Activated CD8-positive, alpha-beta memory T cell treated with anti-CD3 and anti-CD28 coated beads, Interleukin-2, amount 10 ng/mL, durations not matched to agents 7 days and 5 days (primary cell): ENCODE measurements at regions of chr11 and their contacts with region 1.

Region 1: DNA sequence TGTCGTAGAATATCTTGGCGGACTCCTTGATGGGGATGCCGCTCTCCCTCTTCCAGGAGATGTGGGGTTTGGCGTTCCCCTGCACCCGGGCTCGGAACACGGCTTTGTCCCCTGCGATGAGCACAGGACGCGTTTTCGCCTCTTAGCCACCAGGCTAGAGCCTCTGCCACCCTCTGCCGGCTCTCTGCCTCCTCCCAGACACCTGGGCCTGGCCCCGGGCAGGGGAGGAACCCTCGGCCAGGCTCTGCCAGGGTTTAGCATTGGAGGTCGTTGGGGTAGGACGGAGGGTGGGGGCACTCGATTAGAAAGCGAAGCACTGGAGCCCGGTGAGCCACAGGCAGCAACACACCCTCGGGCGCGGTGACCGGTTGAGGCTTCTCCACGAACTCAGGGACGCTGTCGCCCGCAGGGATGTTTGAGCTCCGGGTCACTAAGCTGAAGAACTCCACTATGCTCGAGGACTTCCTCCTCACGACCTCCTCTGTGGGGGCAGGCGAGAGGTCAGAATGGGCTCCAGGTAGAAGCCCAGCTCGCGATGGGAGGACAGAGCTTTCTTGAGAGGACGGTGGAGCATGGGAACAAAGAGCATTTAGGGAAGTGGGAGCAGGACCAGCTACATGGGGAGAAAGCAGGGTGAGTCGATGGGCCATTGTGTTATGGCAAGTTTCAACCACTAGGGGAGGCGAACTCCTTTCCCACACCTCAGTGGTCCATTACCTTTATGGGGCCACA is 4.3 kb downstream of the IGSF22 start:
- DNase-seq: peak; percentile 61
- ATAC-seq: peak; percentile 58
- H3K4me3 Mint-ChIP-seq: peak overlapping the region; percentile 78
- H3K27ac Mint-ChIP-seq: no peak overlapping the region
- H3K4me1 Mint-ChIP-seq: peaks cover 8% of the 10 kb centered on the region
- H3K27me3 Mint-ChIP-seq: peaks cover 8% of the 10 kb centered on the region

Region 2: DNA sequence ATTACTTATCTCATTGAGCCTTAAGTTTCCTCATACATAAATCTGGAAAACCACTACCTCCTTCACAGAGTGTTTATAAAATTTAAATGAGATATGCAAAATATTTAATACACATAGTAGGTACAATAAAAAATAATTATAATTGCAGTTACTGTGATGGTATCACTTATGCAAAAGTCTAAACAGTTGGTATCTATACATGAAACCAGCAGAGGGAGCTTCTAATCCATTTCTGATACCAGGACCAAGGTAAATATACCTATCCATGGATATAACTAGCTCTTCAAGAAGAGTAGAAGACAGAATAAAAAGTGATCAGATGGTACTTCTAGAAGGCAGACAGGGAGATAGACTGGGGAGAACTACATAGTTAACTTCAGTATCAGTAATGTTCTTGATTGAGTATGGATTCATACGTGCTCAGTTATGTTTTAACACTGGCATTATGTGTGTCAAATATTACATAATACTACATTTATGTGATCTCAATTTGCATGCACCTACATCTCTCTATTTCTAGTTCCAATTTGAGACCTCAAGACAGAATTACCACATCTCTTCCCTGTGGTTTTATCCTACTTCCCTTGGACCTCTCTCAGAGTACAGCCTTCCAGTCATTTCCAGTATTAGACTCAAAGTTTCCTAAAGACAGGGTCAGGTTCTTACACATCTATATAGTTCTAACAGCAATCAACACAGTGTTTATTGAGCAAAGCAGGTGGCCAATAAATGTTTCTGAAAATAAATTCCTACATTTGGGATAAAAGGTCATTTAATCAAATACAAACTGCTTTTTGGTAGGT is 181.3 kb before region 1 on chr11:
- CTCF ChIA-PET with region 1: interaction called, 19 read pairs
- DNase-seq: no peak
- ATAC-seq: peak; percentile 55
- H3K4me3 Mint-ChIP-seq: no peak overlapping the region
- H3K27ac Mint-ChIP-seq: no peak overlapping the region
- H3K4me1 Mint-ChIP-seq: no peaks in the 10 kb centered on the region
- H3K27me3 Mint-ChIP-seq: no peaks in the 10 kb centered on the region

Region 3: GRCh38 chr11:18650859-18651557 is 70.7 kb before region 1 on chr11:
- CTCF ChIA-PET with region 1: interaction called, 11 read pairs
- DNase-seq: peak; percentile 67
- ATAC-seq: peak; percentile 83
- H3K4me3 Mint-ChIP-seq: no peak overlapping the region
- H3K27ac Mint-ChIP-seq: peak overlapping the region; percentile 65
- H3K4me1 Mint-ChIP-seq: peaks cover 12% of the 10 kb centered on the region
- H3K27me3 Mint-ChIP-seq: no peaks in the 10 kb centered on the region

Region 4: GRCh38 chr11:18710545-18710944 is 11.2 kb before region 1 on chr11:
- CTCF ChIA-PET with region 1: interaction called, 15 read pairs
- DNase-seq: no peak
- ATAC-seq: no peak
- H3K4me3 Mint-ChIP-seq: no peak overlapping the region
- H3K27ac Mint-ChIP-seq: no peak overlapping the region
- H3K4me1 Mint-ChIP-seq: peaks cover 20% of the 10 kb centered on the region
- H3K27me3 Mint-ChIP-seq: peaks cover 20% of the 10 kb centered on the region

Region 5: DNA sequence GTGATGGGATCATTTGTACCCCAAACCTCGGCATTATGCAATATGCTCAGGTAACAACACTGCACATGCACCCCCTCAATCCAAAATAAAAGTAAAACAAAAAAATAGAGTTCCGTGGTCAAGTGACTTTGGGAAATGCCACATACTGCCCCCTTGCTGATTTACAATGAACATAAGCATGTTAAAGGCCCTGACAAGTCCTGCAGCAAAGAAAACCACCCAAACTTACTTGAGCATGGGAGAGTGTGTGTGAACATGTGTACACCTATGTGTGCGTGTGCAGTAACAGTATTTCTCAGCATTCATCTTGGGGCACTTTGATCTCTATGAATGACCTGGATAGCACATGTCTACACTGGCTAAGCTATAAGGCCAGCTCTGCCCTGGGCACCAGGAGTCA is 20.1 kb after region 1 on chr11:
- CTCF ChIA-PET with region 1: interaction called, 23 read pairs
- DNase-seq: no peak
- ATAC-seq: no peak
- H3K4me3 Mint-ChIP-seq: no peak overlapping the region
- H3K27ac Mint-ChIP-seq: no peak overlapping the region
- H3K4me1 Mint-ChIP-seq: peaks cover 4% of the 10 kb centered on the region
- H3K27me3 Mint-ChIP-seq: no peaks in the 10 kb centered on the region

Region 6: DNA sequence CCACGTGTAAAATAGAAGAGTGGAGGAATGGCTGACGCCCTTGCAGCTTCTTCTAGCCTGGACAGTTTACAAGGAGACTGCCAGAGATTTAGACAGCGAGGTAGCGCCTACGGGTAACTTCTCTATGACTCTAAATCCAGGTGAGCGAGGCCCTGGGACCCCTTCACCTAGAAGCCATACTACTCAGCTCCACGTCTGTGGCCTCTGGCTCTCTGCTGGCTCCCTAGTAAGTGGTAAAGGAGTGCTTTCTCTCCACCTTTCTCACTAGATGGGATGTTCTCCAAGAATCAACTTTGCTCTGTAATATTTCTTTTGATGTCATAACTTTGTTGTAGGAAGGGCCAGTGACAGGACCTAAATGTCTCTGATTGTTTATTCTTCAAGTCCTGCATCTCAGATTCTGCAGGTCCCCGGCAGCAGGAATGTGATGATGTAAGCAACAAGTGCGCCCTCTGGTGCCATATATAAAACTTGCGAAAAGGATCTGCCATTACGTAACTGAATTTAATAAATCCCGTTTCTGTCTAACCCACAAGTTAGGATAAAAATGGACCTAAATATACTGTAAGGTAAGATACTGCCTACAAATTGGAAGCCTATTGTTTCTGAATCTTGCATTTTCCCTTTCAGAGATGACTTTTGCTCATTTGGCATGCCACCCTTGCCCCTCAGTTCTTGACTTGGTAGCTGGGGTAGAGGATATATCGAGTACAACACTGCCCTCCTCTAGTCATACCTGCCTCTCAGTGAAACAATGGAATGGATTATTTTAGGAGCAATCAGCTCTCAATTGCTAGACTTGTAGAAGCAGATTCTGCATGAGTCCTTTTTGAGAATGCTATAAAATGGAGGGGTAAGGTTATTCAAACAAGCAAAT is 80.9 kb after region 1 on chr11:
- CTCF ChIA-PET with region 1: no interaction called
- DNase-seq: peak; percentile 60
- ATAC-seq: no peak
- H3K4me3 Mint-ChIP-seq: no peak overlapping the region
- H3K27ac Mint-ChIP-seq: no peak overlapping the region
- H3K4me1 Mint-ChIP-seq: peaks cover 7% of the 10 kb centered on the region
- H3K27me3 Mint-ChIP-seq: peaks cover 55% of the 10 kb centered on the region

Region 7: DNA sequence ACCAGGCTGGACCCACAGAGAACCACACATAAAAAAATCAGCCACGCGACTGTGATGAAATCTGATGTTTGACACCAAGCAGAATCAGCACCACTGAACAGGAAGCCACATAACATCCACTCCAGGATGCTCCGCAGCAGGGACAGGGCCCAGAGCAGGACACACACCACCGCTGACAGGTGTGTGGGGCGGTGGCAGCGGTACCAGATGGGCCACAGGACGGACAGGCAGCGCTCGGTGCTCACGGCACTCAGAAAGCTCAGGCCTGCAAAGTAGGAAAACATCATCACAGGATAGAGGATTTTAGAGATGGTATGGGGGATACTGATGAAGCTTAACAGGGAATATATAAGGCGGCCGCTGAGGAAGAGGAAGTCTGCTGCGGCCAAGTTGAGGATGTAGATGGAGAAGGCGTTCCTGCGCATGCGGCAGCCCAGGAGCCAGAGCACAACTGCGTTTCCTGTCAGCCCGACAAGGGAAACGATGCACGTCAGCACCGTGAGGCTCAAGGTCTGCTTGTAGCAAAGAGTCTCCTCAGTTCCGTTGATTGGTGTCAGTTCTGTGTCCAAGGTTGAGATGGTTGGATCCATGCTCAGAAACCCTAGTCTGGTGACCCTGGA is 212.6 kb after region 1 on chr11:
- CTCF ChIA-PET with region 1: no interaction called
- DNase-seq: no peak
- ATAC-seq: no peak
- H3K4me3 Mint-ChIP-seq: no peak overlapping the region
- H3K27ac Mint-ChIP-seq: no peak overlapping the region
- H3K4me1 Mint-ChIP-seq: no peaks in the 10 kb centered on the region
- H3K27me3 Mint-ChIP-seq: peaks cover 18% of the 10 kb centered on the region